ENCODE measurements at regions of chr1 and their contacts with region 1.

Region 1: GRCh38 chr1:153967082-153968000 is at the start of gene CREB3L4:
- DNase-seq: peak; percentile 95
- ATAC-seq: peak; percentile 88
- H3K4me3 ChIP-seq: peak within 1 kb of the TSS; percentile 92
- H3K27ac ChIP-seq: peak within 1 kb of the TSS; percentile 91
- H3K4me1 ChIP-seq: peaks cover 15% of the 10 kb centered on the region
- H3K27me3 ChIP-seq: no peaks in the 10 kb centered on the region
- CTCF ChIP-seq: peak; percentile 25 to 63 (median 55); a peak in 5 of 6 replicates
- EP300 ChIP-seq: no peak; a peak in 1 of 4 replicates
- POLR2A ChIP-seq: peak; percentile 90
- RAD21 ChIP-seq: peak; percentile 26; the same call in 1 of the 2 replicates
- polyA plus RNA-seq, gene CREB3L4: 9.7 to 12.9 TPM

Region 2: DNA sequence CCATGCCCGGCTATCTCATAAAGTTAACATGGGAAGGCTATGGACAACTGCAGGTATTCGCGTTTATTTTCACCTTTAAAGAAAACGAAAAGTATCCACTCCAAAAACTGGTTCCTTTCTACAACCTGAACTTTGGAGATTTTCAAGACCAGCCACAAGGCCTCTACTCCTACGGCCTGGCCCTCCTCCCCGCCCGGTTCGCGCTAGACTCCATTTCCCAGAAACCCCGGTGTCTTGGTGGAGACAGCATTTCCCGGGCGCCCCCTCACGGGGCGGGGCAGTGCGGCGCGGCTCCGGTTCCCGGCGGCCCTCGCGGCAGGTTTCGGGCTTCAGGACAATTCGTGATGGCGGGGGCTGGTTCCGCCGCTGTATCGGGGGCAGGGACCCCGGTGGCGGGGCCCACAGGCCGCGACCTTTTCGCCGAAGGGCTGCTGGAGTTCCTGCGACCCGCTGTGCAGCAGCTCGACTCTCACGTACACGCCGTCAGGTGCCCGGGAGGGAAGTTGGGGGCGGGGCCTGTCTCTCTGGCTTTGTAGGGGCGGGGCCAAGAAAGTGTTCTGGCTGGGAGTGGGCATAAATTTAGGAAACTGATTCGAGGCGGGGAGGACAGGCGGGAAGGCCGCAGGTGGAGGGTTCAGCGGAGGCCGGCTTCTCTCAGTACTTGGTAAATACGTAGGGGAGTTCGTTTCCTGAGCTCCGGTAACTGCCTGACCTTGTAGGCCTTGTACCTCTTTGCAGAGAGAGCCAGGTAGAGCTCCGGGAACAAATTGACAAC is 308.8 kb before region 1 on chr1 and contains the start of gene SNAPIN:
- CTCF ChIA-PET with region 1: no interaction called
- POLR2A ChIA-PET with region 1: no interaction called
- RAD21 ChIA-PET with region 1: no interaction called
- SMC1A ChIA-PET with region 1: no interaction called
- in situ Hi-C with region 1: no loop called
- intact Hi-C with region 1: no loop called
- DNase-seq: peak; percentile 58
- ATAC-seq: peak; percentile 99
- H3K4me3 ChIP-seq: peak within 1 kb of the TSS; percentile 94
- H3K27ac ChIP-seq: peak within 1 kb of the TSS; percentile 88
- H3K4me1 ChIP-seq: peaks cover 6% of the 10 kb centered on the region; the same call in 1 of the 2 replicates
- H3K27me3 ChIP-seq: no peaks in the 10 kb centered on the region
- CTCF ChIP-seq: no peak
- EP300 ChIP-seq: 0 out of 4 replicates have a peak, but pooled peaks of 1 of the 2 experiments have one; percentile 17
- POLR2A ChIP-seq: peak; percentile 87
- RAD21 ChIP-seq: no peak
- polyA plus RNA-seq, gene SNAPIN: 12.4 to 25.0 TPM

Region 3: DNA sequence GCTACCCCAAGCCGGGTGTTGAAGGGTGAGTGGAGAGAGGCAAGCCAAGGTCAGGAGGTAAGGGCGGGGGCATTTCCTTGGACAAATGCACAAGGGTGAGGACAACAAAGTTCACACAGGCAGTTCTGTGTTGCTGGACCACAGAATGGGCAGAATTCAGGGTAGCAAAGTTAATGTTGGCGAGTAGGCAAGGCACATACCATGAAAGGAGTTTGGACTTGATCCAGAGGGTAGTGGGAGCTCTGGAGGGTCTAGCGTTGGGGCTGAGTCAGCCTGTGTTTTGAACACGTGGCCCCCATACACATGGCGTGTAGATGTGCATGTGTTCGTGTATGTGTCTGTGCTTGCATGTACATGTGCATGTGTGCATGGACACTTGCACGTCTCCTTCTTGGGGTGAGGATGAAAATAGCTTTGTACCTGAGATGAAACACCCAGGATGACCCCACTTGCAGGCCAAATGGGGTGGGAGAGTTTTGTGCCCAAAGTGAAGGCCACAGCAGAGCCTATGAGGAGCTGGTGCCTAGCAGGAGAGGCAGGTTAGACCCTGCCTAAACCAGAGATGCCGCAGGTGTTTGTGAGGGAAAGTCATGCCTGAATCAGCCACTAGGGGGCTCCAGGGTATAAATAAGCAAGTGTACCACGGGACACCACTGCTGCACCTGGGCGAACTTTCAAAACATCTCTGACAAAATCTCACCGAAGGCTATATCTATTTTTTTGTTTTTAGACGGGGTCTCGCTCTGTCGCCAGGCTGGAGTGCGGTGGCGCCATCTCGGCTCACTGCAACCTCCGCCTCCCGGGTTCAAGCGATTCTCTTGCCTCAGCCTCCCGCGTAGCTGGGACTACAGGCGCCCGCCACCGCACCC is 170.3 kb before region 1 on chr1:
- CTCF ChIA-PET with region 1: interaction called, 25 read pairs
- POLR2A ChIA-PET with region 1: interaction called, 6 read pairs
- RAD21 ChIA-PET with region 1: interaction called, 4 read pairs
- SMC1A ChIA-PET with region 1: interaction called, 5 read pairs
- in situ Hi-C with region 1: no loop called
- intact Hi-C with region 1: no loop called
- DNase-seq: no peak
- ATAC-seq: peak; percentile 93
- H3K4me3 ChIP-seq: no peak overlapping the region
- H3K27ac ChIP-seq: no peak overlapping the region
- H3K4me1 ChIP-seq: peaks cover 6% of the 10 kb centered on the region
- H3K27me3 ChIP-seq: no peaks in the 10 kb centered on the region
- CTCF ChIP-seq: peak; percentile 81 to 90 (median 86)
- EP300 ChIP-seq: no peak
- POLR2A ChIP-seq: no peak
- RAD21 ChIP-seq: peak; percentile 88

Region 4: DNA sequence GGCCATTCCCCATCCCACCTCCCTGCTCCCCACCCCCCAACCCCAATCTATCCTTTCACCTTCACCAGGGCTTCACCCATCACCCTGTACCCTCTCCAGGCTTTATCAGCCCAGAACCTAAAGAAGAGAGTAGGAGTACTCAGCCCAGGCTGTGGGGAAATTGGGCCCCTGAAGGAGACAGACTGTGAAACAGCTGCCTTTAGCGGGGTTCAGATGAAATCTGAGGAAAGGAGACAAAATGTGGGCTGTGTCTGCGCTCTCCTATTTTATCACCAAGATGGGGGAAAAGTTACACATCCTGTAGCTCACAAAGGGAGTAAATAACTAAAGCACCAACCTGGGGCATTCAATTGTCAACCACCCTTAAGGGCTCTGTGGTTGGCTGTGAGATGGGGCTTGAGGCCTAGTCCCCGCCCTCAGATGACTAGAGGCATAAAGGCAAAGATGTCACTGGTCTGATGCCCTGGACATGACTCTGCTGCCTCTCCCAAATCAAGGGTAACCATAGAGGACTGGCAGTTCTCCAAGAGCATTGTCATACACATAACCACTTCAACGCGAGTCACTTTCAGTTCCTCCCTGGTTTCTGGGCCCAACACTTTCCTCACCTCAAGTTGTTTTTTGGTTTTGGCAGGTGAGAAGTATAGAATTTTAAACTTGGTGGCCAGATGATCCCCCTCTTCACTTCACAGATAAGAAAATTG is 162.1 kb before region 1 on chr1:
- CTCF ChIA-PET with region 1: interaction called, 23 read pairs
- POLR2A ChIA-PET with region 1: no interaction called
- RAD21 ChIA-PET with region 1: interaction called, 8 read pairs
- SMC1A ChIA-PET with region 1: interaction called, 12 read pairs
- in situ Hi-C with region 1: no loop called
- intact Hi-C with region 1: loop called (anchors 5 kb)
- DNase-seq: peak; percentile 98
- ATAC-seq: peak; percentile 99
- H3K4me3 ChIP-seq: 0 out of 2 replicates have a peak overlapping the region, but pooled peaks have one; percentile 38
- H3K27ac ChIP-seq: peak overlapping the region; percentile 89
- H3K4me1 ChIP-seq: peaks cover 39% of the 10 kb centered on the region
- H3K27me3 ChIP-seq: no peaks in the 10 kb centered on the region
- CTCF ChIP-seq: no peak
- EP300 ChIP-seq: peak; percentile 90 to 98
- POLR2A ChIP-seq: peak; percentile 38; the same call in 1 of the 2 replicates
- RAD21 ChIP-seq: no peak

Region 5: DNA sequence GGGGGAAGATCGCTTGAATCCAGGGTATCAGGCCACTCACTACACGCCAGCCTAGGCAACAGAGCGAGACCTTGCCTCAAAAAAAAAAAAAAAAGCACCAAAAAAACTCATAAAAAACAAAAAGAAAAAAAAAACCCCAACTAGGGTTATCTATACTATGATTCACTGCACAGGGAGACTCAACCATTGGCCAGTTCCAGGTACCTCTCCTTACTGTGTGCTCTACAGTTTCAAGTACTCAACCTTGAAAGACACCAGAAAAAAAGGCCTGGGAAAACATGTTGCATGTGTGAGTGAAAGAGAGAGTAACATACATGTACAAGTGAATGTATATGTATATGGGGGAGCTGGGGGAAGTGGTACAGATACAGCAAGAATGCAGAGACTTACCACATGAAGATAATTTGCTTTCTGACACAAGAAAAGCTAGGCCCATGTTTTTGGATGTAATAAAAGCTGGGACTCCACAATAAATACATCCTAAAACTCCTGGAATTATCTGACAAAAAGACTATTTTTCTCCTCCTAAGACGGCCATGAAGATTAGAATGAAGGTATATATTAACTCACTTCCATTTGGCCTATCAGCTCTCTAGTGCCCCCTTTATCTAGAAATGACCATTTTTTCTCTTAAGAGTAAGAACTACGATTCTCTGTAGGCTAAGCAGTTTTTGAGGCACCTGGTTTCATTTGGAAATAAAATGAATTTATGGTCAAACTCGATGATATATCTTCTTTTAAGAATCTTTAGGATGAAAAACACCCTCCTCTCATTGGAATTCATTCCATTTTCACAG is 140.0 kb before region 1 on chr1:
- CTCF ChIA-PET with region 1: interaction called, 12 read pairs
- POLR2A ChIA-PET with region 1: no interaction called
- RAD21 ChIA-PET with region 1: interaction called, 4 read pairs
- SMC1A ChIA-PET with region 1: interaction called, 3 read pairs
- in situ Hi-C with region 1: no loop called
- intact Hi-C with region 1: loop called (anchors 5 kb)
- DNase-seq: no peak
- ATAC-seq: peak; percentile 64
- H3K4me3 ChIP-seq: no peak overlapping the region
- H3K27ac ChIP-seq: peak overlapping the region; percentile 52
- H3K4me1 ChIP-seq: peaks cover 10% of the 10 kb centered on the region
- H3K27me3 ChIP-seq: no peaks in the 10 kb centered on the region
- CTCF ChIP-seq: 0 out of 6 replicates have a peak, but pooled peaks of 1 of the 3 experiments have one; percentile 11
- EP300 ChIP-seq: no peak
- POLR2A ChIP-seq: no peak
- RAD21 ChIP-seq: no peak

Region 6: GRCh38 chr1:153849487-153850185 is 117.7 kb before region 1 on chr1:
- CTCF ChIA-PET with region 1: interaction called, 3 read pairs
- POLR2A ChIA-PET with region 1: interaction called, 5 read pairs
- RAD21 ChIA-PET with region 1: interaction called, 4 read pairs
- SMC1A ChIA-PET with region 1: interaction called, 14 read pairs
- in situ Hi-C with region 1: no loop called
- intact Hi-C with region 1: no loop called
- DNase-seq: peak; percentile 78
- ATAC-seq: peak; percentile 92
- H3K4me3 ChIP-seq: 0 out of 2 replicates have a peak overlapping the region, but pooled peaks have one; percentile 4
- H3K27ac ChIP-seq: peak overlapping the region; percentile 70
- H3K4me1 ChIP-seq: peaks cover 46% of the 10 kb centered on the region
- H3K27me3 ChIP-seq: no peaks in the 10 kb centered on the region
- CTCF ChIP-seq: no peak
- EP300 ChIP-seq: peak in 1 of 2 experiments; percentile 20; a peak in 1 of 4 replicates
- POLR2A ChIP-seq: no peak
- RAD21 ChIP-seq: no peak

Region 7: DNA sequence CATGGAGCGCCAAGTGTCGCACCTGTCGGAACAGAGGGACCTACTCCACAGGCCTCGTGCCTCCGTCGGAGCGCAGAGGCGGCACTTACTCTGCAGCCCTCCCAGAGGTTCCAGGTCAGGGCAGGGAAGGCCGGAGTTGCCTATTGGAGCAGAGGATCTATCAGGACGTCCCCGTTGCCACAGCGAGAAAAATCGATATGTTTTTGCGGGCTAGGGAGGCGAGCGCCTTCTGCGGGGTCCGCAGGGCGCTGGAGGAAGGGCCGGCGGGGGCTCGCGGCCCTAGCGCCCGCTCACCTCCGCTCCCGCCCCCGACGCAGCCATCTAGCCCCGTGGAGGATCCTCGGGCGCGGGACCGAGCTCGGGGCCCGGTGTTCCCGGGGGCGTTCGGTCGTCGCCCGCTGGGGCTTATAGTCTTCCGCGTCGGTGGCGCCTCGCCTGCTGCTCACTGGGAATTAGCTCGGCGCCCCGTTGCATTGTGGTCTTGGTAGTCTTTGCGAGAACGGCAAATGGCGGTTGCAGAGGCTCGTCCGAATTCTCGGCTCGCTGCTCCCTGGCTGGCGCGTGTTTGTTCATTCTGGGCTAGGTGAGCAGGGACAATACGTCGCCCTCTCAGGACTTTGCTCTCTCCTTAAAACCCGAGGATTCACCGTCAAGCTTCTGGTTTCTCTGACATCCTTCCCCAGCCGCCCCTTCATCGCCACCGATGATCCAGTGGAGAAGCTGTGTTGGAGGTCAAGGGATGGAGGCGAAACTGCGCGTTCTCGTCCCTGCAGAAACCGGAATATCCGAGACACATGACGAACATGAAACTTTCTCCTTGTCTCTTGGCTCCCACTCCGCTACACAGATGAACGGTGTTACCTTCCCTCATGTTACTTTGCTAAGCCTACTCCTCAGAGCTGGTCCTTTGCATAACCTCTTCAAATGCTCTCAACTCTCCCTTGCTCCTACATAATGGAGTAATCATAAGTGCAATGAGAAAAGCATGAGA is 10.2 kb after region 1 on chr1 and contains the start of gene JTB:
- CTCF ChIA-PET with region 1: interaction called, 62 read pairs
- POLR2A ChIA-PET with region 1: interaction called, 132 read pairs
- RAD21 ChIA-PET with region 1: interaction called, 31 read pairs
- SMC1A ChIA-PET with region 1: interaction called, 82 read pairs
- in situ Hi-C with region 1: no loop called
- intact Hi-C with region 1: no loop called
- DNase-seq: no peak
- ATAC-seq: peak; percentile 95
- H3K4me3 ChIP-seq: peak within 1 kb of the TSS; percentile 87
- H3K27ac ChIP-seq: peak within 1 kb of the TSS; percentile 86
- H3K4me1 ChIP-seq: peaks cover 7% of the 10 kb centered on the region
- H3K27me3 ChIP-seq: no peaks in the 10 kb centered on the region
- CTCF ChIP-seq: no peak
- EP300 ChIP-seq: no peak
- POLR2A ChIP-seq: peak; percentile 95
- RAD21 ChIP-seq: no peak
- polyA plus RNA-seq, gene JTB: 25.0 to 67.7 TPM

Measured in GM12878 (cell line).